ENCODE measurements at regions of chr2 and their contacts with region 1.

Region 1: GRCh38 chr2:70613510-70613909 is 59.9 kb upstream of the TGFA start:
- DNase-seq: no peak
- ATAC-seq: no peak
- H3K4me3 ChIP-seq: no peak overlapping the region
- H3K27ac ChIP-seq: no peak overlapping the region
- H3K4me1 ChIP-seq: peaks cover 8% of the 10 kb centered on the region
- H3K27me3 ChIP-seq: no peaks in the 10 kb centered on the region
- CTCF ChIP-seq: no peak
- POLR2A ChIP-seq: no peak

Region 2: GRCh38 chr2:70340921-70341765 is 272.4 kb before region 1 on chr2:
- intact Hi-C with region 1: loop called (anchors 5 kb)
- DNase-seq: peak; percentile 26 to 42 (median 40)
- ATAC-seq: peak; percentile 75
- H3K4me3 ChIP-seq: no peak overlapping the region
- H3K27ac ChIP-seq: no peak overlapping the region
- H3K4me1 ChIP-seq: no peaks in the 10 kb centered on the region
- H3K27me3 ChIP-seq: no peaks in the 10 kb centered on the region
- CTCF ChIP-seq: peak; percentile 72 to 96 (median 89)
- POLR2A ChIP-seq: no peak